ENCODE measurements at regions of chr7 and their contacts with region 1.

Region 1: DNA sequence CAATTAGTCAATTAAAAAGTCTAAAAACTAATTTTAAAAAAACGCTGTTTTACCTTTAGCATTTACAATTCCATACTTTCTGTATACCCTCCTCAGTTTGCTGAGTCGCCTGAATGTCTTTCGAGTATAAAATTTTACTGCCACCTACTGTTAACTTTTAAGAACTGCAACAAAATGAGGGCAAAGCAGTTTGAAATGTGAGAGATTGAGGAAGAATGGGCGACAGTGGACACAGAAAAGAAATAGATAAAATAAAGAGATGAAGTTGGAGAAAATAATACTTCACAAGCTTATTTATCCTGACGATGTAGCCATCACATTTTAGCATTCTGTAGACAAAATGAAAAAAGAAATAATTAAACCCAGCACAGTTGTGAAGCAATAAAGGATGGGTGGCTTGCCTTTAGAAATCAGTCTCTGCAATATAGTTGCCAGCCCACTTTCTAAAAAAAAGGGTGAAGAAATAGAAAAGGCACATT is 110.8 kb upstream of the PTN start:
- DNase-seq: peak; percentile 29
- H3K4me3 ChIP-seq: peak overlapping the region; percentile 22
- H3K27ac ChIP-seq: peak overlapping the region; percentile 88
- H3K27me3 ChIP-seq: no peaks in the 10 kb centered on the region
- CTCF ChIP-seq: peak; percentile 67

Region 2: GRCh38 chr7:137169282-137169698 is 285.0 kb before region 1 on chr7:
- CTCF ChIA-PET with region 1: interaction called, 24 read pairs
- POLR2A ChIA-PET with region 1: interaction called, 3 read pairs
- DNase-seq: peak; percentile 55
- H3K4me3 ChIP-seq: no peak overlapping the region
- H3K27ac ChIP-seq: no peak overlapping the region
- H3K27me3 ChIP-seq: no peaks in the 10 kb centered on the region
- CTCF ChIP-seq: peak; percentile 84

Region 3: DNA sequence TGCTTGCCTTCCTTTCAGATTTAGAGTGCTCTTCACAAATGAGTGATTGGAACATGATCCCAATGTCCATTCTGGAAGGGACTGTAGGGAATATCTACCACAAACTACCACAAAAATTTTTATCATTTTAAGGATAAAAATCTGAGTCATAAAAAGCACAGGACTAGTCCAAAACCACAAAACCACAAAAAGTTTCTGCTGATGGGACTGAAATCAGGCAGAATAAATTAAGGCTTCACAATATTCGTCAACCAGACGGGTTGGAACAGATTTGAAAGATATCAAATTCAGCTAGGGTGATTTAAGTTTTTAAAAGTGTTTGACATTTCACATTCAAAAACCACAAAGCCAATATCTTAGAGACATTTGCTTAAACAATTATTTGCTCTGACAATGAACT is 10.7 kb before region 1 on chr7:
- CTCF ChIA-PET with region 1: interaction called, 11 read pairs
- POLR2A ChIA-PET with region 1: no interaction called
- DNase-seq: no peak
- H3K4me3 ChIP-seq: no peak overlapping the region
- H3K27ac ChIP-seq: no peak overlapping the region
- H3K27me3 ChIP-seq: no peaks in the 10 kb centered on the region
- CTCF ChIP-seq: no peak

Region 4: DNA sequence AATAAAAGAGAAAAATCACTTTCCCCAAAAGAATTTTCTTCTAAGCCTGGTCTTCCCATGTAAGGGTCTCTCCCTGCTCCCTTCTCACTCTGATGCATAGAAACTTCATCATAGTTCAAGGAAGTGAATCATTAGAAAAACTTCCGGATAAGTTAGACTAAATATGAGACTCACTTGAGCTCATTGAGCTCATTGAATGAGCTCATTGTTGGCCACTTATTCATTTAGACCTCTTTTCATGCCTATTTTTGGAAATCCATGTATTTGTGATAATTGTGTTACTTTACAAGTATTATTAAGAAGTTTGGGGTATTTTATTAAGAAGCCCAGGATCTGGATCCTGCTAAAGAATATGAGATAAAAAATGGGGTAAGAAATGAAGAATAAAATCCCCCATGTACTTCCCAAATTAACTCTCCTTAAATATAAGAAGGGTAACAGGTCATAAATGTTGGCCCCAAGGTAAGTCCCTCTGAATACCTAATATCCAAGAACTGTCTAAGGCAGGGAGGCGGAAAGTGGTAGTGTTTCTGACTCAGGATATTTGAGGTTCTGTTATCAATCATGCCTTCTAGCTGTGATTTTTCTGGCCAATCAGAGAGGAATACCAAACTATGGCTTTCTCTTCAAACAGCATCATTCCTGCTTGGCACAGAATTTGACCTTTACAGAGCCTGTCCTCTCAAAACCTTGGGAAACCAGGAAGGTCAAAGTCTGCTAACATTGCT is 125.8 kb after region 1 on chr7:
- CTCF ChIA-PET with region 1: interaction called, 10 read pairs
- POLR2A ChIA-PET with region 1: no interaction called
- DNase-seq: peak; percentile 65
- H3K4me3 ChIP-seq: no peak overlapping the region
- H3K27ac ChIP-seq: peak overlapping the region; percentile 48
- H3K27me3 ChIP-seq: no peaks in the 10 kb centered on the region
- CTCF ChIP-seq: no peak

Region 5: GRCh38 chr7:138924501-138925225 is 1470.4 kb after region 1 on chr7:
- CTCF ChIA-PET with region 1: no interaction called
- POLR2A ChIA-PET with region 1: no interaction called
- DNase-seq: no peak
- H3K4me3 ChIP-seq: no peak overlapping the region
- H3K27ac ChIP-seq: no peak overlapping the region
- H3K27me3 ChIP-seq: no peaks in the 10 kb centered on the region
- CTCF ChIP-seq: no peak

Measured in AG04450 (cell line).